Endothelial cell of umbilical vein (primary cell): ENCODE measurements at regions of chr11 and their contacts with region 1.

Region 1: DNA sequence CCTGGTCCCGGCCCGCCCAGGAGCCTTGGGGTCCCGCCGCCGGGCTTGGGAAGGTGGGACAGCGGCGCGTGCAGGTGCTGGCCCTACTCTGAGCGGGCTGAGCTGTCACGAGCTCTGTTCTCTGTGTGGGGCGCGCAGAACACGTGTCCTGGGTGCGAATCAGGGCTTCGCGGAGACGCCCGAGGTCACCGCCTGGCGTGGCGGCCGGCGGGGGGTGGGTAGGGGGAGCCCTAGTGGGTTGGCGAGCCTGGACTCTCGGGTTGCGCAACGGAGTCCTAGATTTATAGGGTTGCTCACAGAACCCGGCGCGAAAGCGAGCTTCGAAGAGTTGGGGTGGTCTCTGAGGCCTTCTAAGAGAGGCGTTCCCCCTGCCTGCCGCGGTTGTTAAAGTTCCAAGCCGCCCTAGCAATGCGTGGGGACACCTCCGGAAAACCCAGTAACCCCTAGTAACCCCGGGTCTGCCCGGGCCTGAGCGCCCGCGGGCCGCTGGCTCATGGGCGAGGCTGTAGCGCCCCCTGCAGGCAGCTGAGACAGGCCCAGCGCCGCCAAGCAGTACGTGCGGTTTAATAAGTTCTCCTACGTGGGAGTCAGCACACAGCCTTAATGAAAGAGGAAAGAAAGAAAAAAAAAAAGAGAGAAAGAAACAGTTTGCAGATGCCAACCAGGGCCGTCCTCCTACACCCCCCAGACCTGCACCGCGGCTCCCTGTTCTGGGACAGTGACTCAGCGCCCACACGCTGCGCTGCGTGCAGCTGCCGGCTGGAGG is 2.8 kb downstream of the ADM start:
- DNase-seq: peak; percentile 96
- H3K4me3 ChIP-seq: peak overlapping the region; percentile 91 to 95 (median 93)
- H3K27ac ChIP-seq: peak overlapping the region; percentile 80
- H3K4me1 ChIP-seq: peaks cover 42% of the 10 kb centered on the region
- H3K27me3 ChIP-seq: no peaks in the 10 kb centered on the region
- CTCF ChIP-seq: peak; percentile 87 to 99
- POLR2A ChIP-seq: peak; percentile 90

Region 2: DNA sequence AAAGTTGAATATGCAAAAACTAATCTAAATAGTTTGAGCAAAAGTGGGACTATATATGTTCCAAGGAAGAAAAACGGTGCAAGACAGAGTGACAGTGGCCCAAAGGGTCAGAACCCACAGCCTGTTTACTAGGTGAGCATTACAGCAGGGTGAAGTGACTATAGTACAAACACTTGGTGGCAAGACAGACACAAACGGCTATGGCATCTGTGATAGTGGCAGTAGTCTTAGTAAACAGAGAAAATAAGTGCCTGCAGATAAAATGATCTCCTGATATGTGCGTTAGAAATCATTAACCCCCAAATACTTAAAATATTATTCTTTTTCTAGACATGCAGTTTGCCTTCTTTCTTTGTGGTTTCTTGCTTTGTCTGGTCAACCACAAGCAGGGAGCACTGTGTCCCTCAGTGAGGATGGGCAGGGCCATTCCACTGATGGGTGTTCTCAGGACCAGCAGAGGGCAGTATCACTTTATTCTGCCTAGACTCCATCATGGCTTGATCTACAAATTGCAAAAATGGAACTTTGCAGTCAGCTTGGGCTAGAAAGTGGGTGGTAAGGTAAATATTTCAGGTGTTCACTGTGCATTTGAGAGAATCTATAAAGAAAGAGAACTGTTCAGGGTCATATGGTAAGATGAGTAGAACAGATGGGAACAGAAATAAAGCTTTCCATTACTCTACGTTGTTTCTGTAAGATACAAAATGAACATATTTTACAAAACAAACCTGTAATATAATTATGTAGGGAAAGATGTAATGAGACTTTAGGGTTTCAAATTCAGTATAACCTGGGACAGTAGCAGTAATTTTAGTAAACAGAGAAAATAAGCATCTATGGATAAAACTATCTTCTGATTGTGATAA is 445.5 kb before region 1 on chr11:
- CTCF ChIA-PET with region 1: interaction called, 8 read pairs
- POLR2A ChIA-PET with region 1: no interaction called
- dilution Hi-C with region 1: no loop called
- intact Hi-C with region 1: loop called (anchors 1 kb)
- DNase-seq: peak; percentile 74
- H3K4me3 ChIP-seq: no peak overlapping the region
- H3K27ac ChIP-seq: no peak overlapping the region
- H3K4me1 ChIP-seq: peaks cover 40% of the 10 kb centered on the region
- H3K27me3 ChIP-seq: no peaks in the 10 kb centered on the region
- CTCF ChIP-seq: peak; percentile 66 to 74
- POLR2A ChIP-seq: no peak

Region 3: GRCh38 chr11:9927670-9928069 is 380.0 kb before region 1 on chr11:
- CTCF ChIA-PET with region 1: no interaction called
- POLR2A ChIA-PET with region 1: no interaction called
- dilution Hi-C with region 1: no loop called
- intact Hi-C with region 1: no loop called
- DNase-seq: no peak
- H3K4me3 ChIP-seq: no peak overlapping the region
- H3K27ac ChIP-seq: no peak overlapping the region
- H3K4me1 ChIP-seq: no peaks in the 10 kb centered on the region
- H3K27me3 ChIP-seq: no peaks in the 10 kb centered on the region
- CTCF ChIP-seq: no peak
- POLR2A ChIP-seq: no peak

Region 4: DNA sequence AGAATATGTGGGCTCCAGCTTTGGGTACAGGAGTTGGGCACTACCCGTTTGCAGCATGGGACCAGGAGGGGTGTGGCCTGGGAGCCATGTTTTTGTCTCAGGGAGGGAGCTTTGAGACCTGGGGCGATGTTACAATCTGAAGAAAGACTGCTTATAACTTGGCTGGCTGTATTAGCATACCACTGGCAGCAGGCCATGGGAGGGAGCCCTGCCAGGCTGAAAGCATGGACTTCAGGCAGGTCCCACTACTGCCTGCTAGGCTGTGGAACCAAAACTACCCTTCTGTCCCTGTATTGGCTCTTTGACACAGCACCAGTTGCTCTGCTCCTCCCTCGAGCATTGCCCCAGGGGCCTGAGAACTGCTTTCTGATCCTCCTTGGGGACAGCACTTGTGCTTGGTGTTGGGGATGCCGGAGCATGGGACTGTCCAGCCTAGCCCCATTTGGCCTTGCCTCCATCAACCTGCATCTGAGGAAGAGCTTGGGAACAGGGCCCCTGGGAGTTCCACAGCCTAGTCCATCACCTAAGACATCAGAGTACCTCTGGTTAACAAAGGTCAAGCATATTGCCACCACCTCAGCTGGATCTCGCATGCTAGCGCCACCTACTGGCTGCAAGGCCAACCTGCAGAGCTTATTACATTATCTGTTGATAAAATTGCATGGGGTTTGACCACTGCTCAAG is 231.0 kb before region 1 on chr11:
- CTCF ChIA-PET with region 1: interaction called, 3 read pairs
- POLR2A ChIA-PET with region 1: no interaction called
- dilution Hi-C with region 1: no loop called
- intact Hi-C with region 1: loop called (anchors 1 kb)
- DNase-seq: peak; percentile 28
- H3K4me3 ChIP-seq: no peak overlapping the region
- H3K27ac ChIP-seq: no peak overlapping the region
- H3K4me1 ChIP-seq: no peaks in the 10 kb centered on the region
- H3K27me3 ChIP-seq: no peaks in the 10 kb centered on the region
- CTCF ChIP-seq: peak; percentile 51 to 84
- POLR2A ChIP-seq: no peak

Region 5: GRCh38 chr11:10293423-10294289 is 14.0 kb before region 1 on chr11 and contains the start of gene SBF2:
- CTCF ChIA-PET with region 1: interaction called, 9 read pairs
- POLR2A ChIA-PET with region 1: interaction called, 13 read pairs
- dilution Hi-C with region 1: no loop called
- intact Hi-C with region 1: loop called (anchors 1 kb)
- DNase-seq: peak; percentile 92
- H3K4me3 ChIP-seq: peak within 1 kb of the TSS; percentile 34 to 96 (median 57)
- H3K27ac ChIP-seq: peak within 1 kb of the TSS; percentile 67
- H3K4me1 ChIP-seq: peaks cover 29% of the 10 kb centered on the region
- H3K27me3 ChIP-seq: no peaks in the 10 kb centered on the region
- CTCF ChIP-seq: no peak
- POLR2A ChIP-seq: peak; percentile 99
- total RNA-seq, gene SBF2: 36.7 and 42.4 TPM in 2 replicates

Region 6: DNA sequence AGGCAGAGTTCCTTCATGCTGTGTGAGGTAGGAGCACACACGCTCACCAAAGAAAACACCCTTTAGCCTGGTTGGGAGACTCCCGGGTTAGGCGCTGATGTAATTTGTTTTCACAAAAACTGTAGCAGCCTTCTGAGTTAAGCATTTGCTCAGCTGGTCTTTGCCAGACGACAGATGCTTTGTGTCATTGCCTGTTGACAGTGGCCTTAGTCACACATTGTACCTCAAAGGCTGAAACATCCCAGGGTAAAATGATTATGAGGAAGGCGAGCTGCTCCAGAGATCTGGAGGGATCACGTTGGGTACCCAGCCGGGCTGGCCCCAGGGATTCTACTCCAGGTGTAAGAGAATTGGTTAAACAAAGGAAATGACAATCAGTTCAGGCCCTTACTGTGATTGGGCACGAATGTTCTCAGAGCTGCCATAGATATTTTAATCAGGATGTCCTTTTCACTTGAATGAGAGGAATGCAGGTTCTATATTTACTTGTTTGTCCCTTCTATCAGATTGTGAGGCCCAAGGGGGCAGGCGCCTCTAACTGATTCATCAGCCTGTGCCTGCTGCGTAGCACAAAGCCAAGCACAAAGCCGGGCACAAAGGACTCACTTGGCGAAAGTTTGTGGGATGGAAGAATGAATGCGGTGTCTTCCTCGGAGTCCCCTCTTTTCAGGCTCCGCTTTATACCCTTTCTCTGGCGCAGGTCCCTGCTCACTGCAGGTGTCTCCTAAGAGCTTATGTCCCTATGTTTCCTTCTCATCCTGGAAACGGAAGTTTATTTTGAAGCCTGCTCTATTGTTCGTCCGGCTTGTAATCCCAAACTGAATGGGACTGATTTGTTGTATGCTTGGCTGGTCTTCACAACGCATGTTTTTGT is 44.4 kb after region 1 on chr11:
- CTCF ChIA-PET with region 1: interaction called, 7 read pairs
- POLR2A ChIA-PET with region 1: interaction called, 7 read pairs
- dilution Hi-C with region 1: no loop called
- intact Hi-C with region 1: loop called (anchors 1 kb)
- DNase-seq: peak; percentile 79
- H3K4me3 ChIP-seq: no peak overlapping the region
- H3K27ac ChIP-seq: peak overlapping the region; percentile 89
- H3K4me1 ChIP-seq: peaks cover 23% of the 10 kb centered on the region
- H3K27me3 ChIP-seq: no peaks in the 10 kb centered on the region
- CTCF ChIP-seq: no peak
- POLR2A ChIP-seq: no peak

Region 7: GRCh38 chr11:10653926-10654810 is 346.5 kb after region 1 on chr11:
- CTCF ChIA-PET with region 1: no interaction called
- POLR2A ChIA-PET with region 1: interaction called, 9 read pairs
- dilution Hi-C with region 1: no loop called
- intact Hi-C with region 1: loop called (anchors 1 kb)
- DNase-seq: peak; percentile 73
- H3K4me3 ChIP-seq: no peak overlapping the region
- H3K27ac ChIP-seq: no peak overlapping the region
- H3K4me1 ChIP-seq: peaks cover 21% of the 10 kb centered on the region
- H3K27me3 ChIP-seq: no peaks in the 10 kb centered on the region
- CTCF ChIP-seq: peak; percentile 72 to 78
- POLR2A ChIP-seq: no peak